Gastrocnemius medialis (tissue), 4 donors: ENCODE measurements at regions of chr6 and their contacts with region 1.

Region 1: GRCh38 chr6:34248727-34249551 is at the start of gene SMIM29:
- DNase-seq: peak; percentile 96 to 97
- ATAC-seq: peak; percentile 87
- H3K4me3 ChIP-seq: peak within 1 kb of the TSS; percentile 88 to 98 (median 91)
- H3K27ac ChIP-seq: peak within 1 kb of the TSS; percentile 88 to 95 (median 93)
- H3K4me1 ChIP-seq: peaks cover 19 to 20% of the 10 kb centered on the region in 2 donors
- H3K27me3 ChIP-seq: no peaks in the 10 kb centered on the region
- CTCF ChIP-seq: peak; percentile 90 to 100 (median 99)
- POLR2A ChIP-seq: peak; percentile 93 to 94
- total RNA-seq, gene SMIM29: 21.4 to 39.5 (median 33.4) TPM

Region 2: GRCh38 chr6:34154668-34155447 is 94.1 kb before region 1 on chr6:
- in situ Hi-C with region 1: no loop called
- intact Hi-C with region 1: no loop called
- DNase-seq: no peak
- ATAC-seq: peak in 1 of 2 donors; percentile 64
- H3K4me3 ChIP-seq: peak overlapping the region in 2 of 4 donors; percentile 21 to 28
- H3K27ac ChIP-seq: no peak overlapping the region
- H3K4me1 ChIP-seq: peaks cover 0 to 7% of the 10 kb centered on the region in 2 donors
- H3K27me3 ChIP-seq: peaks cover 14 to 28% (median 20%) of the 10 kb centered on the region in 3 donors
- CTCF ChIP-seq: peak; percentile 86 to 97 (median 90)
- POLR2A ChIP-seq: no peak

Region 3: GRCh38 chr6:34196126-34196830 is 52.7 kb before region 1 on chr6:
- in situ Hi-C with region 1: no loop called
- intact Hi-C with region 1: loop called (anchors 1 kb)
- DNase-seq: peak; percentile 62 to 76
- ATAC-seq: peak; percentile 95 to 98
- H3K4me3 ChIP-seq: peak overlapping the region; percentile 56 to 87 (median 64)
- H3K27ac ChIP-seq: no peak overlapping the region
- H3K4me1 ChIP-seq: peaks cover 3 to 5% of the 10 kb centered on the region in 2 donors
- H3K27me3 ChIP-seq: no peaks in the 10 kb centered on the region
- CTCF ChIP-seq: peak; percentile 94 to 98 (median 98)
- POLR2A ChIP-seq: no peak

Region 4: GRCh38 chr6:34273242-34273805 is 24.4 kb after region 1 on chr6:
- in situ Hi-C with region 1: no loop called
- intact Hi-C with region 1: loop called (anchors 2 kb)
- DNase-seq: no peak
- ATAC-seq: no peak
- H3K4me3 ChIP-seq: no peak overlapping the region
- H3K27ac ChIP-seq: peak overlapping the region; percentile 7 to 55 (median 37)
- H3K4me1 ChIP-seq: peaks cover 32 to 36% of the 10 kb centered on the region in 2 donors
- H3K27me3 ChIP-seq: no peaks in the 10 kb centered on the region
- CTCF ChIP-seq: no peak
- POLR2A ChIP-seq: no peak

Region 5: GRCh38 chr6:34392497-34393190 is 143.7 kb after region 1 on chr6 and contains the start of gene NUDT3:
- in situ Hi-C with region 1: no loop called
- intact Hi-C with region 1: loop called (anchors 1 kb)
- DNase-seq: peak; percentile 91 to 94
- ATAC-seq: peak; percentile 73 to 75
- H3K4me3 ChIP-seq: peak within 1 kb of the TSS; percentile 76 to 99 (median 87)
- H3K27ac ChIP-seq: peak within 1 kb of the TSS; percentile 98 to 100 (median 98)
- H3K4me1 ChIP-seq: peaks cover 41 to 48% of the 10 kb centered on the region in 2 donors
- H3K27me3 ChIP-seq: no peaks in the 10 kb centered on the region
- CTCF ChIP-seq: peak; percentile 87 to 94 (median 91)
- POLR2A ChIP-seq: peak; percentile 91 to 93
- total RNA-seq, gene NUDT3: 40.0 to 71.9 (median 50.6) TPM

Region 6: GRCh38 chr6:34414999-34415858 is 166.3 kb after region 1 on chr6:
- in situ Hi-C with region 1: loop called in 2 of 4 experiments (anchors 5 kb)
- intact Hi-C with region 1: loop called (anchors 1 kb)
- DNase-seq: peak; percentile 51 to 57
- ATAC-seq: peak; percentile 94 to 96
- H3K4me3 ChIP-seq: no peak overlapping the region
- H3K27ac ChIP-seq: peak overlapping the region; percentile 41 to 59 (median 54)
- H3K4me1 ChIP-seq: peaks cover 7 to 10% of the 10 kb centered on the region in 2 donors
- H3K27me3 ChIP-seq: no peaks in the 10 kb centered on the region
- CTCF ChIP-seq: peak; percentile 76 to 84 (median 78)
- POLR2A ChIP-seq: no peak

Region 7: DNA sequence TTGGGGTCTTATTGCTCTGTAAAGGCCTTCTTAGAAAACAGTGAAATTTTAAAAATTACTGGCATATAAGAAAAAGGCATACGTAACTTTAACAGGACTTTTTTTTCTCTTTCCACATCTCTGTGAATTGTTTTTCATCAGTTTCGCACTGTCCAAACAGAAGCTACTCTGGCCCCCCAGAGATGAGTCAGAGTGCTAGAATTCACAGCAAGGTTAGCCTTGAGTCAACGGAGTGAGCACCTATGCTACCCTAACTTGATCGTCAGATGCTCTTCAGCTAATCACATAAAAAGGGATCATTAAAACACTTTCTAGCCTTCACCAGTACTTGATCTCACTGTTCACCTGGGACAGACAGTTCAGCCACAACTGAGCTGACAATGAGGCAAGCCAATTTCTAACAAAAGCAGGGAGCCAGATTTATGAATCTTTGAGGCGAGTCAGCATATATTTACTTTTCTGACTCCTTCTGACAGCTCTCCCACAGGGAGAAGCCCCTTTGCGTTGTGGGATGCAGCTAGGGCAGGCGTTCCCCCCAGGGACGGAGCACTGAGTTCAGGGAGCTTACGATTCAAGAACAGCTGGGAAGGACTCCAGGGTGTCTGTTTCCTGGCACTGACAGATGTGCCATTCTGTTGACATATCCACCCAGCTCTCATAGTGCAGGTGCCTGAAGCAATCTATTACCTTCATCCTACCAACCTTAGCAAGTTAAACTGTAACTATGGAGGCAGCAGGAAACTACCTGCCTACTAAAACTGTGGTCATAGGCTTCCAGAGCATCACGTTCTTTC is 353.6 kb after region 1 on chr6:
- in situ Hi-C with region 1: loop called in 1 of 4 experiments (anchors 25 kb)
- intact Hi-C with region 1: loop called (anchors 5 kb)
- DNase-seq: peak; percentile 63 to 76
- ATAC-seq: peak; percentile 72 to 73
- H3K4me3 ChIP-seq: no peak overlapping the region
- H3K27ac ChIP-seq: peak overlapping the region; percentile 65 to 92 (median 80)
- H3K4me1 ChIP-seq: peaks cover 68 to 71% of the 10 kb centered on the region in 2 donors
- H3K27me3 ChIP-seq: no peaks in the 10 kb centered on the region
- CTCF ChIP-seq: no peak
- POLR2A ChIP-seq: no peak

Region 8: DNA sequence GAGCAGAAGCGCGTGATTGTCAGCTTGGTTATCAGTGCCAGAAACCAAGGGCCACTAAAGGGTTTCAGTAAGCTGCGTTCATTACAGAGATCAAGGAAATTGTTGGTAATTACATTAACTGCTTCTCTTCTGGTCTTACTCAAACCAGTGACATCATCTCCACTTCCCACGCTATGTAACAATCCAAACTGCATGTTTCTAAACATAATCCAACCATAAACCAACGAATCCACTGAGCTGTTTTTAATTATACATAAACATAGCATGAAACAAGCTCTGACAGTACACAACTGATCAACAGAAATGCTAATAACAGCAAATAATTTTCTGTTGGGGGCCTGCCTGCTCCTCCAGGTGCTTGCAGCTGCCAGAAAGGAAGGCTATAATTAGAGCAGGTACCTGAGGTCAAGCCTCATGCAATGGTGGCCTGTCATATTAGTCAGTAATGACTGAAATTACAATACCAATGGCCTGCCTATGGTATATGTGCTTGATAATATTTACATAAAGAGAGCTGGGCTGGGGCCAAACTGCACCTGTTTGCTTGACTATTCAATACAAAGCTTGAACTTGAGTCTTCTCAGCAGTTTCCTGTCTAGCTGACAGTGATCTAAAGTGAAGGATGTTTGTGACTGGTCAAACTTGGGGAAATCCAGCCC is 407.6 kb after region 1 on chr6:
- in situ Hi-C with region 1: no loop called
- intact Hi-C with region 1: loop called (anchors 5 kb)
- DNase-seq: peak; percentile 50 to 63
- ATAC-seq: peak; percentile 73 to 82
- H3K4me3 ChIP-seq: peak overlapping the region; percentile 51 to 60 (median 58)
- H3K27ac ChIP-seq: peak overlapping the region; percentile 92 to 97 (median 94)
- H3K4me1 ChIP-seq: peaks cover 59 to 62% of the 10 kb centered on the region in 2 donors
- H3K27me3 ChIP-seq: no peaks in the 10 kb centered on the region
- CTCF ChIP-seq: no peak
- POLR2A ChIP-seq: no peak

Region 9: DNA sequence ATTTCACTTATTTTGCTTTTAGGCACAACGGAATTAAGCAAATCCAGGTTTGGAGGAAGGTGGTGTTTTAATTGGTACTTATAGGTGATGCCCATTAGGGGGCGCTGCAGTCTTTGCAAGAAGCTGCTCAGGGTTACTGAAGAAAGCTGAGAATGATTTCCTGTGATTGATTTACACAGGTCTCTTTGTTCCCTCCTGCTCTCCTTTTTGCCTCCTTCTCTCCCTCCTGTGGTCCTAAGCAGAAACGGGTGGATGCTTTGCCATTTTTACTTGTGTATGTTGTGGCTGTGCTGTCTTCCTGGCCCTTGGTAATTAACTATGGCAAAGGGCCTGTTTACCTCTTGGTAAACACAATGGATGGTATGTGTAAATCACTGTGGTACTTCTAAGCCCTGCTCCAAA is 737.9 kb after region 1 on chr6:
- in situ Hi-C with region 1: no loop called
- intact Hi-C with region 1: no loop called
- DNase-seq: peak; percentile 53 to 59
- ATAC-seq: peak; percentile 76 to 89
- H3K4me3 ChIP-seq: no peak overlapping the region
- H3K27ac ChIP-seq: no peak overlapping the region
- H3K4me1 ChIP-seq: peaks cover 5 to 6% of the 10 kb centered on the region in 2 donors
- H3K27me3 ChIP-seq: no peaks in the 10 kb centered on the region
- CTCF ChIP-seq: peak; percentile 79 to 90 (median 88)
- POLR2A ChIP-seq: no peak